B cell (primary cell): ENCODE measurements at regions of chr11 and their contacts with region 1.

Region 1: GRCh38 chr11:67401495-67402191 is at the start of gene PPP1CA:
- DNase-seq: peak; percentile 93
- ATAC-seq: peak; percentile 72
- H3K4me3 ChIP-seq: peak within 1 kb of the TSS; percentile 65 to 92 (median 85)
- H3K4me3 Mint-ChIP-seq: peak within 1 kb of the TSS; percentile 87
- H3K27ac ChIP-seq: peak within 1 kb of the TSS; percentile 70 to 83
- H3K27ac Mint-ChIP-seq: peak within 1 kb of the TSS; percentile 95
- H3K4me1 ChIP-seq: peaks cover 57 to 79% of the 10 kb centered on the region in 2 donors
- H3K4me1 Mint-ChIP-seq: peaks cover 67% of the 10 kb centered on the region
- H3K27me3 ChIP-seq: no peaks in the 10 kb centered on the region
- H3K27me3 Mint-ChIP-seq: no peaks in the 10 kb centered on the region
- CTCF ChIP-seq: peak; percentile 70
- total RNA-seq, gene PPP1CA: 248 and 251 TPM in 2 replicates

Region 2: GRCh38 chr11:67252831-67253239 is 148.8 kb before region 1 on chr11:
- CTCF ChIA-PET with region 1: no interaction called
- POLR2A ChIA-PET with region 1: no interaction called
- intact Hi-C with region 1: no loop called
- DNase-seq: peak; percentile 55
- ATAC-seq: peak; percentile 41
- H3K4me3 ChIP-seq: no peak overlapping the region
- H3K4me3 Mint-ChIP-seq: no peak overlapping the region
- H3K27ac ChIP-seq: no peak overlapping the region
- H3K27ac Mint-ChIP-seq: peak overlapping the region; percentile 67
- H3K4me1 ChIP-seq: no peaks in the 10 kb centered on the region
- H3K4me1 Mint-ChIP-seq: peaks cover 7% of the 10 kb centered on the region
- H3K27me3 ChIP-seq: no peaks in the 10 kb centered on the region
- H3K27me3 Mint-ChIP-seq: no peaks in the 10 kb centered on the region
- CTCF ChIP-seq: peak; percentile 57

Region 3: GRCh38 chr11:67382276-67383136 is 19.1 kb before region 1 on chr11:
- CTCF ChIA-PET with region 1: interaction called, 22 read pairs
- POLR2A ChIA-PET with region 1: interaction called, 4 read pairs
- intact Hi-C with region 1: no loop called
- DNase-seq: peak; percentile 88
- ATAC-seq: peak; percentile 86
- H3K4me3 ChIP-seq: no peak overlapping the region
- H3K4me3 Mint-ChIP-seq: peak overlapping the region; percentile 84
- H3K27ac ChIP-seq: peak overlapping the region in 1 of 2 donors; percentile 88
- H3K27ac Mint-ChIP-seq: peak overlapping the region; percentile 92
- H3K4me1 ChIP-seq: peaks cover 22 to 33% of the 10 kb centered on the region in 2 donors
- H3K4me1 Mint-ChIP-seq: peaks cover 22% of the 10 kb centered on the region
- H3K27me3 ChIP-seq: no peaks in the 10 kb centered on the region
- H3K27me3 Mint-ChIP-seq: no peaks in the 10 kb centered on the region
- CTCF ChIP-seq: peak; percentile 96

Region 4: DNA sequence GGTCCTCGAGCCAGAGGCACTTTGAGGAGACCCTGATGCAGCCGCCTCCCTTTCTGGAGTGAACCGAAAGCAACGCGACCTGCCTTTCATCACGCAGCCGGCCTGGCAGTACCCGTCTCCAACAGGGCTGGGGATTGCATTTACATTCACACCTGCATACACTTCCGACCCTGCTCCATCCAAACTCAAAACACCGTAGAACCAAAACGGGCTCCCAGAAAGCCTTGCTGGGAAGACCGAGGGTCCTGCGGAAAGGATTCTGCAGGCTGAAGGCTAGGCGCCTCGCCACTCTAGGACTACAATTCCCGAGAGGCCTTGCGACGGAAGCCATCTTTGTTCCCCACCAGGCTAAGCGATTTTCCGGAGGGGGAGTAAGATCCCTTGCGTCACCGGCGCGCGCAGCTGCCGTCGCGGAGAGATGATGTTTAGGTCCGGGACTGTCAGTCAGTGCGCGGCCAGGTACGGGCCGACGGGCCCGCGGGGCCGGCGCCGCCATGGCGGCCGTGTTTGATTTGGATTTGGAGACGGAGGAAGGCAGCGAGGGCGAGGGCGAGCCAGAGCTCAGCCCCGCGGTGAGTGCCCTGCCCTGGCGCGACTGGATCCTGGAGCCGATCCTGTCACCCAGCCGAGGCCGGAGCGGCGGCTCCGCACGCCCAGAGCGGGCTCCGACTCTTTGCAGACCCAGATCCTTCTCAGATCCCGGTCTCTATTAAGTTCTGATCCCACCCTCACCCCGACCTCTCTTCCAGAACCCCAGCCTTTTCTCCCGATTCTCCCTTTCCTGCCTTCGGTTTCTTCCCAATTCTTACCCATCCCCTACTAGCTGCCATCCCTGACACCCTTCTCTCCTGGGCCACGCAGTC is 26.6 kb after region 1 on chr11 and contains the start of gene RPS6KB2:
- CTCF ChIA-PET with region 1: interaction called, 121 read pairs
- POLR2A ChIA-PET with region 1: interaction called, 195 read pairs
- intact Hi-C with region 1: loop called (anchors 1 kb)
- DNase-seq: peak; percentile 98
- ATAC-seq: peak; percentile 86
- H3K4me3 ChIP-seq: peak within 1 kb of the TSS; percentile 82 to 95 (median 91)
- H3K4me3 Mint-ChIP-seq: peak within 1 kb of the TSS; percentile 99
- H3K27ac ChIP-seq: peak within 1 kb of the TSS; percentile 70 to 92
- H3K27ac Mint-ChIP-seq: peak within 1 kb of the TSS; percentile 96
- H3K4me1 ChIP-seq: peaks cover 13 to 46% of the 10 kb centered on the region in 2 donors
- H3K4me1 Mint-ChIP-seq: peaks cover 41% of the 10 kb centered on the region
- H3K27me3 ChIP-seq: no peaks in the 10 kb centered on the region
- H3K27me3 Mint-ChIP-seq: no peaks in the 10 kb centered on the region
- CTCF ChIP-seq: no peak
- total RNA-seq, gene RPS6KB2: 81.8 and 82.0 TPM in 2 replicates

Region 5: GRCh38 chr11:67468835-67469811 is 67.5 kb after region 1 on chr11 and contains the start of gene TMEM134:
- CTCF ChIA-PET with region 1: interaction called, 64 read pairs
- POLR2A ChIA-PET with region 1: interaction called, 115 read pairs
- intact Hi-C with region 1: loop called (anchors 1 kb)
- DNase-seq: peak; percentile 92
- ATAC-seq: peak; percentile 75
- H3K4me3 ChIP-seq: peak within 1 kb of the TSS; percentile 61 to 96 (median 91)
- H3K4me3 Mint-ChIP-seq: peak within 1 kb of the TSS; percentile 95
- H3K27ac ChIP-seq: peak within 1 kb of the TSS; percentile 78 to 87
- H3K27ac Mint-ChIP-seq: peak within 1 kb of the TSS; percentile 95
- H3K4me1 ChIP-seq: peaks cover 31 to 55% of the 10 kb centered on the region in 2 donors
- H3K4me1 Mint-ChIP-seq: peaks cover 49% of the 10 kb centered on the region
- H3K27me3 ChIP-seq: no peaks in the 10 kb centered on the region
- H3K27me3 Mint-ChIP-seq: no peaks in the 10 kb centered on the region
- CTCF ChIP-seq: peak; percentile 63
- total RNA-seq, gene TMEM134: 154 and 167 TPM in 2 replicates

Region 6: GRCh38 chr11:67583247-67584204 is 181.9 kb after region 1 on chr11 and contains the start of gene GSTP1:
- CTCF ChIA-PET with region 1: no interaction called
- POLR2A ChIA-PET with region 1: no interaction called
- intact Hi-C with region 1: loop called (anchors 10 kb)
- DNase-seq: peak; percentile 86
- ATAC-seq: peak; percentile 71
- H3K4me3 ChIP-seq: peak within 1 kb of the TSS; percentile 34 to 69 (median 58)
- H3K4me3 Mint-ChIP-seq: peak within 1 kb of the TSS; percentile 93
- H3K27ac ChIP-seq: peak within 1 kb of the TSS; percentile 51 to 91
- H3K27ac Mint-ChIP-seq: peak within 1 kb of the TSS; percentile 100
- H3K4me1 ChIP-seq: peaks cover 67 to 73% of the 10 kb centered on the region in 2 donors
- H3K4me1 Mint-ChIP-seq: peaks cover 68% of the 10 kb centered on the region
- H3K27me3 ChIP-seq: peaks cover 0 to 4% (median 2%) of the 10 kb centered on the region in 4 experiments
- H3K27me3 Mint-ChIP-seq: peaks cover 5% of the 10 kb centered on the region
- CTCF ChIP-seq: peak; percentile 71
- total RNA-seq, gene GSTP1: 296 and 313 TPM in 2 replicates